ENCODE measurements at regions of chr9 and their contacts with region 1.

Region 1: GRCh38 chr9:33446946-33447798 is at the start of gene AQP3:
- DNase-seq: peak; percentile 85
- H3K4me3 Mint-ChIP-seq: peak within 1 kb of the TSS; percentile 84
- H3K27ac Mint-ChIP-seq: peak within 1 kb of the TSS; percentile 94
- H3K4me1 Mint-ChIP-seq: peaks cover 64% of the 10 kb centered on the region
- H3K27me3 Mint-ChIP-seq: no peaks in the 10 kb centered on the region
- total RNA-seq, gene AQP3: 162 to 167 TPM

Region 2: DNA sequence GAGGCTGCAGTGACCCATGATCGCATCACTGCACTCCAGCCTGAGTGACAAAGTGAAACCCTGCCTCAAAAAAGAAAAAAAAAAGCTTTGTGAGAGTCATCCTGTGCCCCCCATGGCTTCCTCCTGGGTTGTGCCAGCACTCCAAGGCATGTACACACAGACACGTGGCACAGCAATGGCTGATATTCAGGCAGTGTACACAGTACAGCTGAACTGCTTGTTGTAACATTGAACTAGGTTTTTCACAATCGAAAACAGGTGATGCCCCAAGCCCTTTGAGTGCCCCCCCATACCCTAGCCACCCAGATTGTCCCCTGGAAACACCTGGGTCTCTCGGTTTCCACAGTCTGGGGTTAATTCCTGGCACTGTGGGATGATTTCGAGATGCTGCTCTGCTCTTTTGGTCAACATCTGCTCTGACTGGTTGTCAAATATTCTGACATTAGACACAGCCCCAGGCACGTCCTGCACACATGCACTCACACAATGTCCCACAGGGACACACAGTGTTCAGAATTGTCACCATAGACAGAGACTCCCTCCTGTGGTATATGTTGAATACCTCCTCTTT is 198.0 kb before region 1 on chr9:
- CTCF ChIA-PET with region 1: no interaction called
- POLR2A ChIA-PET with region 1: no interaction called
- DNase-seq: no peak
- H3K4me3 Mint-ChIP-seq: no peak overlapping the region
- H3K27ac Mint-ChIP-seq: no peak overlapping the region
- H3K4me1 Mint-ChIP-seq: peaks cover 5% of the 10 kb centered on the region
- H3K27me3 Mint-ChIP-seq: no peaks in the 10 kb centered on the region

Region 3: DNA sequence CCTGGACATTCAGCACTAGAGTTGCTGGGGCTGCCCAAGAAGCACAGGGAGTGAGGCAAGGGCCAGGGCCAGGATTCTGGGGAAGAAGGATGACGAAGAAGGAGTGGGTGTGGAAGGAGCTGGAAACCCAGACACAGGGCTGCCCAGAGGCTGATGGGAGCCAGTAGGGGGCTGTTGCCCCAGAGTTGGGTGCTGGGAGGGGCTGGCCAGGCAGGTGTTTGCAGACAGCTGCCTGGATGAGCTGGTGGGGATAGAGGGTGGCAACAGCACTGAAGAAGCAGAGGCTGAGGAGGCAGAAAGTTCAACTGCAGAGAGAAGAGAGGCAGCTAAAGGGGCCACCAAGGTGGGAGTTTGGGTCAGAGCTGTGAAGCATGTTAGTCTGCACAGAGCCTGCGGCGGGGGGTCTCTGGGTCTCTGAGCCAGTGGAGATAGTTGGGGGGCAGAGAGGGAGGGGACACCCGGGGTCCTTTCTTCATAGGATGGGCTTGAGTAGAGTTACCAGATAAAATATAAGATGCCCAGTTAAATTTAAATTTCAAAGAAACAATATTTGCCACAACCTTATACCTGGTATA is 42.3 kb before region 1 on chr9:
- CTCF ChIA-PET with region 1: interaction called, 278 read pairs
- POLR2A ChIA-PET with region 1: interaction called, 3 read pairs
- DNase-seq: no peak
- H3K4me3 Mint-ChIP-seq: no peak overlapping the region
- H3K27ac Mint-ChIP-seq: no peak overlapping the region
- H3K4me1 Mint-ChIP-seq: peaks cover 10% of the 10 kb centered on the region
- H3K27me3 Mint-ChIP-seq: no peaks in the 10 kb centered on the region

Region 4: GRCh38 chr9:33436440-33436839 is 10.7 kb before region 1 on chr9:
- CTCF ChIA-PET with region 1: interaction called, 26 read pairs
- POLR2A ChIA-PET with region 1: interaction called, 11 read pairs
- DNase-seq: no peak
- H3K4me3 Mint-ChIP-seq: no peak overlapping the region
- H3K27ac Mint-ChIP-seq: no peak overlapping the region
- H3K4me1 Mint-ChIP-seq: peaks cover 55% of the 10 kb centered on the region
- H3K27me3 Mint-ChIP-seq: no peaks in the 10 kb centered on the region

Region 5: GRCh38 chr9:33458444-33458843 is 11.3 kb after region 1 on chr9:
- CTCF ChIA-PET with region 1: interaction called, 189 read pairs
- POLR2A ChIA-PET with region 1: interaction called, 14 read pairs
- DNase-seq: peak; percentile 58
- H3K4me3 Mint-ChIP-seq: no peak overlapping the region
- H3K27ac Mint-ChIP-seq: peak overlapping the region; percentile 81
- H3K4me1 Mint-ChIP-seq: peaks cover 54% of the 10 kb centered on the region
- H3K27me3 Mint-ChIP-seq: no peaks in the 10 kb centered on the region

Region 6: DNA sequence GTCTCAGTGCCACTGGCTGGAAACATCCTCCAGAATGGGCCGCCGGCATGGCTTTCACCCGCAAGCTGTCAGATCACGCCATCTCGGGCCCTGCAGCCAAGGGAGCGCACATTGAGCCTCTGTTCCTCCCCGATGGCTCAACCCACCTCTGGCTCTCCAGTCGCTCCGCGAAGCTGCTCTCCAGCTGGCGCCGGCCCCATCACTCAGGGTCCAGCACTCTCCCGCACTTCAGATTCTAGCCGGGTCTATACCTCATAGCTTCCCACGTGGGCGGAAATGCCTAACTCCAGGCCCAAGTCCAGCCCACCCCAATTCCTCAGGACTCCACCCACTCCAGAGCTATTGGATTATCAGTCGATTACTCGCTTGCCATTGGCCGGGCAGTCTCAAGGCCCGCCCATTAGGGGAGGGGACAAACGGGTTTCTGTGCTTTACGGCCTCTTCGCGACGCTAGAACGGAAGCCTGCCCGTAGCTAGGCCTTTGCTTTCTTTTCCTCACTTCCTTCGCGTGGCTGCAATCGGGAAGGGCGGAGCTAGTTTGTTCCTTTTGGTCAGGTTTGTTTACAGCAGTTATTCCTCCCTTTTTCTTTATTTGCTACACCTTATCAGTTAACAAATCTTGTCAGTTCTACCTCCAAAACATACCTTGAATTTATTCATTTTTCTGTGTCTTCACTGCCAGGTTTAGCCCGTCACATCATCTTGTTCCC is 26.6 kb after region 1 on chr9 and contains the start of gene NOL6:
- CTCF ChIA-PET with region 1: interaction called, 189 read pairs
- POLR2A ChIA-PET with region 1: interaction called, 26 read pairs
- DNase-seq: peak; percentile 98
- H3K4me3 Mint-ChIP-seq: peak within 1 kb of the TSS; percentile 92
- H3K27ac Mint-ChIP-seq: peak within 1 kb of the TSS; percentile 85
- H3K4me1 Mint-ChIP-seq: peaks cover 30% of the 10 kb centered on the region
- H3K27me3 Mint-ChIP-seq: no peaks in the 10 kb centered on the region
- total RNA-seq, gene NOL6: 21.6 to 22.4 TPM